Activated B cell treated with CpG ODN at 0.5 μM for 24 hours (primary cell): ENCODE measurements at regions of chr15 and their contacts with region 1.

Region 1: GRCh38 chr15:50908210-50909009 is at the start of gene AP4E1:
- DNase-seq: peak; percentile 93
- ATAC-seq: peak; percentile 58
- H3K4me3 Mint-ChIP-seq: peak within 1 kb of the TSS; percentile 91
- H3K27ac Mint-ChIP-seq: peak within 1 kb of the TSS; percentile 97
- H3K4me1 Mint-ChIP-seq: peaks cover 40% of the 10 kb centered on the region
- H3K27me3 Mint-ChIP-seq: no peaks in the 10 kb centered on the region
- CTCF ChIP-seq: no peak
- total RNA-seq, gene AP4E1: 11.1 and 13.4 TPM in 2 replicates

Region 2: GRCh38 chr15:49155110-49155833 is 1753.1 kb before region 1 on chr15 and contains the start of gene COPS2:
- CTCF ChIA-PET with region 1: no interaction called
- POLR2A ChIA-PET with region 1: no interaction called
- intact Hi-C with region 1: loop called (anchors 1 kb)
- DNase-seq: peak; percentile 78
- ATAC-seq: peak; percentile 93
- H3K4me3 Mint-ChIP-seq: peak within 1 kb of the TSS; percentile 95
- H3K27ac Mint-ChIP-seq: peak within 1 kb of the TSS; percentile 95
- H3K4me1 Mint-ChIP-seq: peaks cover 43% of the 10 kb centered on the region
- H3K27me3 Mint-ChIP-seq: no peaks in the 10 kb centered on the region
- CTCF ChIP-seq: no peak
- total RNA-seq, gene COPS2: 53.1 and 54.4 TPM in 2 replicates

Region 3: DNA sequence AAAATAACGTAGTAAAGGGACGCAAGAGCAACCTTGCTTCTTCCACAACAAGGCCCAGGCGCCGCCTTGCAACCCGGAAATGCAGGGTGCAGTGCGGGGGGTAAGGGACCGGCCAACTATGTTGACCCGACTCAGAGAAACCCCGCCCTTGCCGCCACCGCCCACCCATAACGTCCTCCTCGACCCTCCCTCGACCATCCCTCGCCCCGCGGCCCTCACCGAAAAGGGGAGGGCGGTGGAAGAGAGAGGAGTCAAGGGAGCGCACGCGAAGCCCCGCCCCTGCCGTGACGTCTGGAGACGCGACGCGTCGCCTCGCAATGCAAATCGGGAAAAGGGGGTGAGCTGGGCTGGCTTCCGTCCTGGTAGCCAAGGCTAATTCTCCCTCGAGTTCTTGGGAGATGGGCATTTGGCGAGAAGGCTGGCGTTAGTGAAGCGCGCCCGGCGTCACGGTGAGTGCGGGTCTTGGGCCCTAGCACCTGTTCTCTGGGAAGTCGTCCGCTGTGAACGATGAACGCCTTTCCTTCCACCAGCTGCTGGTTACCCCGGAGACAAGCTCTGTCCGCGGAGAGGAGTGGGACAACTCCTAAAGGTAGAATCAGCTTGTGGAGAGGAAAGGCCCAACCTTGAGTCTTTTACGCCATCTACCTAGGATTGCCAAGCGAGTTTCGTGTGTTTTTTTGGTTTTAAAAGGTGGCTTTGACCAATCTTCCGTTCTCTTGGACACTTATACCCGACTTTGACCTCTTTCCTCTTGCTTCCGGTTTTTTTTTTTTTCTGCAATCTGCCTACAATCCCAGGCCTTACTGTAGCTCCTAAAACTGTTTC is 484.1 kb before region 1 on chr15 and contains the start of gene USP8:
- CTCF ChIA-PET with region 1: no interaction called
- POLR2A ChIA-PET with region 1: no interaction called
- intact Hi-C with region 1: loop called (anchors 1 kb)
- DNase-seq: peak; percentile 90
- ATAC-seq: peak; percentile 98
- H3K4me3 Mint-ChIP-seq: peak within 1 kb of the TSS; percentile 90
- H3K27ac Mint-ChIP-seq: peak within 1 kb of the TSS; percentile 89
- H3K4me1 Mint-ChIP-seq: peaks cover 44% of the 10 kb centered on the region
- H3K27me3 Mint-ChIP-seq: no peaks in the 10 kb centered on the region
- CTCF ChIP-seq: no peak
- total RNA-seq, gene USP8: 71.3 and 78.3 TPM in 2 replicates

Region 4: GRCh38 chr15:50627351-50628055 is 280.9 kb before region 1 on chr15:
- CTCF ChIA-PET with region 1: no interaction called
- POLR2A ChIA-PET with region 1: no interaction called
- intact Hi-C with region 1: loop called (anchors 2 kb)
- DNase-seq: no peak
- ATAC-seq: no peak
- H3K4me3 Mint-ChIP-seq: no peak overlapping the region
- H3K27ac Mint-ChIP-seq: no peak overlapping the region
- H3K4me1 Mint-ChIP-seq: peaks cover 2% of the 10 kb centered on the region
- H3K27me3 Mint-ChIP-seq: no peaks in the 10 kb centered on the region
- CTCF ChIP-seq: no peak

Region 5: DNA sequence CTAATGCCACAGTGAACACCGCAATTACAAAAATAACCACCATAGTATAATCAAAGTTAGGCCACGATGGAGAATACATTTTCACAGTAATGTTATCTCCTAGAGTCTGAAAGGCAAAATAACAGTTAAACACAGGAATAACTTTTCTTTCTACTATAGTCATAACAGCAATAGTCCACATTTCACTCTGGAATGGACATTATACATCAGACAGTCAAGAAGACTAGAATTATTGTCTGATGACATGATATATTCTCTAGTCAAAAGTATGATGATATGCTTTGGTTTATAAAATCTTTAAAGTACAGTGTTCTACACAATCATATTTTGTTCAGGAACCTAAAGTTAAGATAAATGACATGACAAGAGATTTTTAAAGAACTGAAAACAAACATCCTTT is 160.9 kb before region 1 on chr15:
- CTCF ChIA-PET with region 1: no interaction called
- POLR2A ChIA-PET with region 1: no interaction called
- intact Hi-C with region 1: loop called (anchors 5 kb)
- DNase-seq: no peak
- ATAC-seq: no peak
- H3K4me3 Mint-ChIP-seq: no peak overlapping the region
- H3K27ac Mint-ChIP-seq: no peak overlapping the region
- H3K4me1 Mint-ChIP-seq: no peaks in the 10 kb centered on the region
- H3K27me3 Mint-ChIP-seq: no peaks in the 10 kb centered on the region
- CTCF ChIP-seq: no peak

Region 6: GRCh38 chr15:50813877-50814276 is 94.5 kb before region 1 on chr15:
- CTCF ChIA-PET with region 1: no interaction called
- POLR2A ChIA-PET with region 1: no interaction called
- intact Hi-C with region 1: no loop called
- DNase-seq: no peak
- ATAC-seq: no peak
- H3K4me3 Mint-ChIP-seq: no peak overlapping the region
- H3K27ac Mint-ChIP-seq: no peak overlapping the region
- H3K4me1 Mint-ChIP-seq: no peaks in the 10 kb centered on the region
- H3K27me3 Mint-ChIP-seq: peaks cover 4% of the 10 kb centered on the region
- CTCF ChIP-seq: no peak

Region 7: DNA sequence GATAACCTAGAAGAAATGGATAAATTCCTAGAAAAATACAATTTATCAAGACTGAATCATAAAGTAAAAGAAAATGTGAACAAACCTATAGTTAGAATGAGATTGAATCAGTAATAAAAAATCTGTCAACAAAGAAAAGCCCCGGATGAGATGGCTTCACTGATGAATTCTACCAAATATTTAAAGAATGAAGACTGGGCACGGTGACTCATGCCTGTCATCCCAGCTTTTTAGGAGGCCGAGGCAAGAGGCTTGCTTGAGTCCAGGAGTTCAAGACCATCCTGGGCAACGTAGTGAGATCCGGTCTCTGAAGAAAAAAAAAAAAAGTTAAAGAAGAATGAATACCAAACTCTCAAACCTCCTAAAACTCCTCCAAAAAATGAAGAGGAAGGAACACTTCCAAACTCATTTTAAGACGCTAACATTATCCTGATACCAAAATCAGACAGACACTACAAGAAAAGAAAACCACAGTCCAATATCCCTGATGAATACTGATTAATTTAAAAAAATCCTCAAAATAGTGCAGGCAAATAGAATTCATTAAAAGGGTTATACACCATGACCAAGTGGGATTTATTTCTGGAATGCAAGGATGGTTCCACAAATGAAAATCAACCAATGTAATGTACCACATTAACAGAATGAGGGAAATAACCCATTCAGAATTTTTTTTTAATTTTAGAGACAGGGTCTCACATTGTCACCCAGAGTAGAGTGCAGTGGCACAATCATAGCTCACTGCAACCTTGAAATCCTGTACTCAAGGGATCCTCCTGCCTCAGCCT is 17.4 kb before region 1 on chr15:
- CTCF ChIA-PET with region 1: interaction called, 8 read pairs
- POLR2A ChIA-PET with region 1: interaction called, 4 read pairs
- intact Hi-C with region 1: loop called (anchors 1 kb)
- DNase-seq: no peak
- ATAC-seq: no peak
- H3K4me3 Mint-ChIP-seq: no peak overlapping the region
- H3K27ac Mint-ChIP-seq: no peak overlapping the region
- H3K4me1 Mint-ChIP-seq: peaks cover 2% of the 10 kb centered on the region
- H3K27me3 Mint-ChIP-seq: no peaks in the 10 kb centered on the region
- CTCF ChIP-seq: no peak

Region 8: DNA sequence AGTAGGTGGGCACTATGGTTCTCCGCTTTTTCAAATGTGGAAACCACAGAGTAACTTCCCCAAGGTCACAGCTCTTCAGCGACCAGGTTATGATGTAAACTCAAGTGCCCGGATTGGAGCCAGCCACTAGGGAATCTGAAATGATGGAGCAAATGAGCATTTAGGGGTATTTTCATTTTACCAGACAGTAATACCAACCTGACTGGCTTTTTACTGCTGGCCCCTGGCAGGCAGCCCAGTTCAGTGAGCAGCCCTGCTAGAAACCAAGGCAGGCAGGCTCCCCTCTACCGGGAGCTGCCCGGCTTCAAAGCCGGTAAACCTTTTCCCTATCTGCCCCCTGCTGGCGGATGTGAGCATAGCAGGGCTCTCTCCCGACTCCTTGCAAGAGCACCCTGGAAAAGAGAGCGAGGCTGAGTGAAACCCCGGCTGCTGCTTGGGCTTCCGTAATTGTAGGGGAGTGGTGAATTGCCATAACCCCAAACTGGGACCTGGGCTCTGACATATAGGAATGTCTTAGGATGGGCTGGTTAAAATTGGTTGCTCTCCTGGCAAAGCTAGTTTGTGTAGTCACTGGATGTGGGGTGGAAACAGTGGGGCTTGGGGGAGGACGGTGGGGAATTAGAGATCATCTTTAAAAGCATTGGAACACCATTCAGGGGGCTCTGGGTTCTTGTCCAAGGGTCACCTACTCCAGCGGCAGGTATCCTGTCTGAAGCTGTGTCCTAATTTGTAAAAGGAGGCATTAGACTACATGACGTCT is 284.3 kb after region 1 on chr15:
- CTCF ChIA-PET with region 1: no interaction called
- POLR2A ChIA-PET with region 1: no interaction called
- intact Hi-C with region 1: no loop called
- DNase-seq: peak; percentile 57
- ATAC-seq: peak; percentile 49
- H3K4me3 Mint-ChIP-seq: no peak overlapping the region
- H3K27ac Mint-ChIP-seq: no peak overlapping the region
- H3K4me1 Mint-ChIP-seq: no peaks in the 10 kb centered on the region
- H3K27me3 Mint-ChIP-seq: peaks cover 37% of the 10 kb centered on the region
- CTCF ChIP-seq: peak; percentile 78